ENCODE measurements at regions of chr2 and their contacts with region 1.

Region 1: GRCh38 chr2:60998628-60999545 is 18.6 kb upstream of the PEX13 start:
- DNase-seq: no peak
- H3K4me3 Mint-ChIP-seq: no peak overlapping the region
- H3K27ac Mint-ChIP-seq: no peak overlapping the region
- H3K4me1 Mint-ChIP-seq: no peaks in the 10 kb centered on the region
- H3K27me3 Mint-ChIP-seq: no peaks in the 10 kb centered on the region

Region 2: DNA sequence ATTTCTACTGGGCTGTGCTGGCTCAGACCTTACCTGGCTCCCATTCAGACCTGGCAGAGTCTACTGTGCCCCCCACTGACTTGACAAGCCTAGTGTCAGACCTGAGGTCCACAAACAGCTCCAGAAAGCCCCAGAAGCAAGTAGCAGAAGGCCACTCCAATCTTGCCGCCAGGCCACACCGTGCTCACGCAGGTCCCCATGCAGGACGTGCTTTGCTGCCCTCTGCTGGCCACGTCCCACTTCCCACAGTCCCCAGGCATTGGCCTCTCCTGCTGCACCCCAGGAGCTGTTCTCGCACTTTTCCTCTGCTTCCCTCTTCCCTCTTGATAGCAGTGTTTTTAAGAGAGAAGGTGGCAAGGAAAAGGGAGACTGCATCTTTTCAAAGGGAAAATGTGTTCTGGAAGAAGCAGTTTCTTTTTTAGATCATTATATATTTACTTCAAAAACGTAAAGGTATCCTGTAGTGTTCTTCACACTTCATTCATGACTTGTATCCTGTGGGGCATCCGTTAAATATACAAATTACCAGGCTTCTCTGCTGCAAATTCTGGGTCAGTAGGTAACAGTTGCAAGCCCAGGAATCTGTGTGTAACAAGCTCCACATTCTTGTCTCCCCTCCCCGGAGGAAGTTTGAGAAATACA is 324.2 kb before region 1 on chr2:
- CTCF ChIA-PET with region 1: interaction called, 12 read pairs
- POLR2A ChIA-PET with region 1: no interaction called
- DNase-seq: peak; percentile 82
- H3K4me3 Mint-ChIP-seq: no peak overlapping the region
- H3K27ac Mint-ChIP-seq: no peak overlapping the region
- H3K4me1 Mint-ChIP-seq: peaks cover 4% of the 10 kb centered on the region
- H3K27me3 Mint-ChIP-seq: peaks cover 12% of the 10 kb centered on the region

Region 3: GRCh38 chr2:60707750-60708371 is 291.0 kb before region 1 on chr2:
- CTCF ChIA-PET with region 1: interaction called, 55 read pairs
- POLR2A ChIA-PET with region 1: no interaction called
- DNase-seq: no peak
- H3K4me3 Mint-ChIP-seq: no peak overlapping the region
- H3K27ac Mint-ChIP-seq: no peak overlapping the region
- H3K4me1 Mint-ChIP-seq: no peaks in the 10 kb centered on the region
- H3K27me3 Mint-ChIP-seq: peaks cover 3% of the 10 kb centered on the region

Region 4: DNA sequence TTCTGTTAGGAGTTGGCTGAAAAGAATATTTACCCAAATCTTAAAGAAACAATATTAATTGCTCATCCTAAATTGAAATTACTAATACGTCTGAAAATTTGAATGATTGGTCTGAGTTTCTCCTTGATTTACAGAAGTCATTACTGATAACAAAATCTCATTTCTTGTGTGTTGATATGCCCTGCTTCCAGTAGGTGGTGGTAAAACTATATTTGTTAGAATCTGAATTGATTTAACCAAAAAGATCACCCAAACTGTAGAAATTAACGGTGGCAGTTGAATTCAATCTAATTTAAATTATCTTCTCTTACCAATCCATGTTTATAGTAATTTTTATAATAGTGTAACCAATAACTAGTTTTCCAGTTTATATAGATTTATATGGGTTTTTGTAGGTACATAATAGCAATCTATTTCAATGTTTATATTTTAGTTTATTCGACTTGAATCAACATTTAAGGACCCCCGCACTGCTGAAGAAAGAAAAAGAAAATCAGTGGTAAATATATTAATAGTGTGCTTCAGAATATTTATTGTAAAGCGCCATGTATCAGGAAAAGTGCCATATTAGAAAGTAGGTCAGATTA is 204.5 kb before region 1 on chr2:
- CTCF ChIA-PET with region 1: interaction called, 16 read pairs
- POLR2A ChIA-PET with region 1: no interaction called
- DNase-seq: no peak
- H3K4me3 Mint-ChIP-seq: no peak overlapping the region
- H3K27ac Mint-ChIP-seq: no peak overlapping the region
- H3K4me1 Mint-ChIP-seq: peaks cover 15% of the 10 kb centered on the region
- H3K27me3 Mint-ChIP-seq: no peaks in the 10 kb centered on the region

Region 5: GRCh38 chr2:60804414-60804851 is 194.5 kb before region 1 on chr2:
- CTCF ChIA-PET with region 1: interaction called, 25 read pairs
- POLR2A ChIA-PET with region 1: interaction called, 5 read pairs
- DNase-seq: no peak
- H3K4me3 Mint-ChIP-seq: no peak overlapping the region
- H3K27ac Mint-ChIP-seq: no peak overlapping the region
- H3K4me1 Mint-ChIP-seq: peaks cover 27% of the 10 kb centered on the region
- H3K27me3 Mint-ChIP-seq: no peaks in the 10 kb centered on the region

Region 6: GRCh38 chr2:60818272-60818671 is 180.6 kb before region 1 on chr2:
- CTCF ChIA-PET with region 1: interaction called, 15 read pairs
- POLR2A ChIA-PET with region 1: interaction called, 3 read pairs
- DNase-seq: peak; percentile 24
- H3K4me3 Mint-ChIP-seq: no peak overlapping the region
- H3K27ac Mint-ChIP-seq: peak overlapping the region; percentile 26
- H3K4me1 Mint-ChIP-seq: peaks cover 37% of the 10 kb centered on the region
- H3K27me3 Mint-ChIP-seq: peaks cover 7% of the 10 kb centered on the region

Region 7: GRCh38 chr2:60987041-60987440 is 11.8 kb before region 1 on chr2:
- CTCF ChIA-PET with region 1: interaction called, 10 read pairs
- POLR2A ChIA-PET with region 1: no interaction called
- DNase-seq: no peak
- H3K4me3 Mint-ChIP-seq: no peak overlapping the region
- H3K27ac Mint-ChIP-seq: no peak overlapping the region
- H3K4me1 Mint-ChIP-seq: peaks cover 2% of the 10 kb centered on the region
- H3K27me3 Mint-ChIP-seq: no peaks in the 10 kb centered on the region